ENCODE measurements at regions of chr15 and their contacts with region 1.

Region 1: GRCh38 chr15:89874926-89875564 is 18.7 kb downstream of the AP3S2 start:
- DNase-seq: peak; percentile 77 to 90
- ATAC-seq: peak; percentile 99 to 100
- H3K4me3 ChIP-seq: no peak overlapping the region
- H3K27ac ChIP-seq: no peak overlapping the region
- H3K4me1 ChIP-seq: no peaks in the 10 kb centered on the region
- CTCF ChIP-seq: peak; percentile 98
- EP300 ChIP-seq: no peak
- POLR2A ChIP-seq: no peak
- RAD21 ChIP-seq: peak; percentile 93 to 94

Region 2: GRCh38 chr15:89647191-89647851 is 227.7 kb before region 1 on chr15:
- CTCF ChIA-PET with region 1: interaction called, 12 read pairs
- POLR2A ChIA-PET with region 1: no interaction called
- DNase-seq: peak; percentile 73 to 94
- ATAC-seq: peak; percentile 87 to 96
- H3K4me3 ChIP-seq: no peak overlapping the region
- H3K27ac ChIP-seq: peak overlapping the region in 1 of 2 experiments; percentile 39; a peak in 1 of 6 replicates
- H3K4me1 ChIP-seq: no peaks in the 10 kb centered on the region
- CTCF ChIP-seq: peak; percentile 90
- EP300 ChIP-seq: no peak
- POLR2A ChIP-seq: no peak
- RAD21 ChIP-seq: peak; percentile 57

Region 3: DNA sequence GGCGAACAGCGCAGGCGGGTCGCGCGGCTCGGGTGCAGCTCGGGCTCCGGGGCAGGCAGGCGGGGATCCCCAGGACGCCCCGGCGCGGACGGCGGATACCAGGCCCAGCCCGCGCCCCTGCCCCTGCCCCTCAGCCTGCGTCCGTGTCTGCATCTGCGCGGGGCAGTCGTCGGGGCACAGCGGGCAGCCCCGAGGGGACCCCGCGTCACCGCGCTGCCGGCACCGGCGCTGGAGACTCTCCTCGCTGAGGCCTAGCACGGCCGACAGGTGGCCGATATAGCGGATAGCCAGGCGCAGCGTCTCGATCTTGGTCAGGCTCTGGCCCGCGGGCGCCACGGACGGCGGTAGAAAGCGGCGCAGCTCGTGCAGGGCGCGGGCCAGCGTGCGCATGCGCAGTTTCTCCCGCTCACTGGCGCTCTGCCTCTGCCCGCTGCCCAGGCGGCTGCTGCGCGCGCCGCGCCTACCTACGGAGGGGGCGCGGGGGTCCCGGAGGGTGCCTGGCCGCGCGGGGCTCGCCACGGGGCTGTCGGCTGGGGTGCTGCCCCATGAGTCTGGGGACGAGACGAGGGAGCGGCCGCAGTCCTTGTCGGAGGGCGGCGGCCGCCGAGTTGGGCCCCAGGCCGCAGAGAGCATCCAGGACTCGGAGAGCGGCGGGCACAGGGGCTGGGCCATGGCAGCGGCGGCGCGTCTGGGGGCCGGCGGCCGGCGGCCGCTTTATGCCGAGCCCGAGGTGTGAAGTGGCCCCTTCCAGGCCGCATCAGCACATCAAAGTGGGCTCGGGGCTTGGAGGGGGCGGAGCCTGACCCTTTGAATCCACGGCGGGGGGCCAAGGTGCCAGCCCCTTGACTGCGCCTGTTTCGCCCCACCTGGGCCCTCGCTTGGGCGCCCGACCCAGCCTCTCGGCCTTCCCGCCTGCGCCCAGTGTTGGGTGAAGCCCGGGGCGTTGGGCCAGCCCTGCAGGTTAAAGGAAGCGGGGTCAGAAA is 124.2 kb before region 1 on chr15 and contains the start of gene MESP1:
- CTCF ChIA-PET with region 1: interaction called, 491 read pairs
- POLR2A ChIA-PET with region 1: interaction called, 5 read pairs
- DNase-seq: peak; percentile 96
- ATAC-seq: peak; percentile 94 to 98
- H3K4me3 ChIP-seq: peak within 1 kb of the TSS; percentile 60
- H3K27ac ChIP-seq: peak within 1 kb of the TSS; percentile 81 to 91
- H3K4me1 ChIP-seq: peaks cover 23% of the 10 kb centered on the region
- CTCF ChIP-seq: peak; percentile 74
- EP300 ChIP-seq: no peak
- POLR2A ChIP-seq: peak; percentile 93
- RAD21 ChIP-seq: peak; percentile 51 to 64
- polyA plus RNA-seq, gene MESP1: 1.2 and 1.7 TPM in 2 replicates

Region 4: DNA sequence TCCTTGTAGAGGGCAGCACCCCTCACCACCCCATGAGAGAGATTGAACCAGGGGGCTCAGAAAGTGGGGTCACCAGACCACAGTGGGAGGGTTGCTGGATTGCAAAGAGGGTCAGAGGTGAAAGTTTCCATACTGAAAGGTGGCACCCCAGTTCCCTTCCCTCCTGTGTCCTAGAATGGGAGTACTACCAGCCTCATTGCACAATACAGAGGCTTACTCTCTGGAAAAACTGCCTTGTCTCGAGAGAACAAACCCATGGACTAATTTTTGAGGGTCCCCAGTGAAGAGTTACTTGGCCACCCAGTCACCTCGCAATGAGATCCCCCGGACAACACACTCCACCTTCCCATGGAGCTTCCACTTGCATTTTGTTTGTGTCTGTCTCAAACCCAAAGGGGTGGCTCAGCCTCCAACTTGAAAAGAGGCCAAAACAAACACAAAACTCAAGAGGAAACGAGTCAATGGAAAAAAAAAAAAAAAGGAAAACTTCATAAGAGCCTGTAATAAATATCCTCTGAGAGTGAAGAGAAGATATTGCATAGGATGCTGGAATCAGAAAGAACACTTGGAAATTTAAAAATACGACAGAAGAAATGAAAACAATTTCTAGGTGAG is 80.3 kb before region 1 on chr15:
- CTCF ChIA-PET with region 1: interaction called, 11 read pairs
- POLR2A ChIA-PET with region 1: no interaction called
- DNase-seq: no peak
- ATAC-seq: no peak
- H3K4me3 ChIP-seq: no peak overlapping the region
- H3K27ac ChIP-seq: peak overlapping the region; percentile 21 to 70; a peak in 3 of 6 replicates
- H3K4me1 ChIP-seq: peaks cover 18% of the 10 kb centered on the region
- CTCF ChIP-seq: no peak
- EP300 ChIP-seq: no peak
- POLR2A ChIP-seq: no peak
- RAD21 ChIP-seq: no peak

Region 5: GRCh38 chr15:89828241-89829082 is 46.6 kb before region 1 on chr15:
- CTCF ChIA-PET with region 1: interaction called, 27 read pairs
- POLR2A ChIA-PET with region 1: no interaction called
- DNase-seq: peak in 1 of 2 experiments; percentile 32
- ATAC-seq: peak; percentile 42 to 65; a peak in 5 of 6 replicates
- H3K4me3 ChIP-seq: no peak overlapping the region
- H3K27ac ChIP-seq: peak overlapping the region in 1 of 2 experiments; percentile 68; a peak in 3 of 6 replicates
- H3K4me1 ChIP-seq: peaks cover 27% of the 10 kb centered on the region
- CTCF ChIP-seq: no peak
- EP300 ChIP-seq: no peak
- POLR2A ChIP-seq: no peak
- RAD21 ChIP-seq: no peak

Region 6: GRCh38 chr15:89857673-89858072 is 17.4 kb before region 1 on chr15:
- CTCF ChIA-PET with region 1: interaction called, 53 read pairs
- POLR2A ChIA-PET with region 1: no interaction called
- DNase-seq: peak; percentile 49 to 60
- ATAC-seq: peak; percentile 59 to 78; a peak in 5 of 6 replicates
- H3K4me3 ChIP-seq: no peak overlapping the region
- H3K27ac ChIP-seq: peak overlapping the region; percentile 56 to 66; a peak in 4 of 6 replicates
- H3K4me1 ChIP-seq: peaks cover 29% of the 10 kb centered on the region
- CTCF ChIP-seq: no peak
- EP300 ChIP-seq: no peak
- POLR2A ChIP-seq: no peak
- RAD21 ChIP-seq: no peak

Region 7: DNA sequence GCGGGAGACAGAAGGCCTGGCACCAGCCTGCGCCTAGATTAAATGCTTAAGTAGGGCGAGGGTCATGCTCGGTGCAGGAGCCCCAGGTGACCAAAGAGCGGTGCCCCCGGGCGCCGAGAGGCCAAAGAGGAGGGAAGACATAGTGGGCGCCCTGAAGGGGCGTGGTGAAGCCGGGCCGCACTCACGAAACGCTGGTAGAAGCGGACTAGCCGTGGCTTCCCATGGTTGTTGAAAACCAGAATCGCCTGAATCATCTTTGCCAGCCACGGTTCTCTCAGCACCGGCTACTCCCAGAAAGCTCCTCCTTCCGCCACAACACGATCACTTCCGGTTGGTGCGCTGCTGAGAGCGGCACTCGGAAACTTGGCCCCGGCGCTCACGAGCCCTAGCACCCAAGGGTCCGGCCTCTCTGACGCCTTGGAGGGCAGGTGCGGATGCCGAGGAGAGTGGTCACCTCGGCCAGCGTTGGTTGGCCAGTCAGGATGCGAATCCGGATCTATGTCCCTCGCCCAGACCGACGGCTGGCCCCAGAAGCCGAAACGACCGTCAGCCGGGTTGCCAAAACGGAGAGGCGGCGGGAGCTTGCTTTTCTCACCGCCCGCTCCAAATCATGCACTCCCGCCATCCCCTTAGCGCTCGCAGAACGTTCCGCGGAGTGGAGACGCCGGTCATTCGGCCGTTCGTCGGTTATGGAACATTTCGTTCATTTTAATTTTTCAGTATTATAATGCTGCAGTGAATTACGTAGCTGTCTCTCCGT is 18.8 kb after region 1 on chr15 and contains the start of gene AP3S2:
- CTCF ChIA-PET with region 1: interaction called, 162 read pairs
- POLR2A ChIA-PET with region 1: interaction called, 11 read pairs
- DNase-seq: peak; percentile 91 to 98
- ATAC-seq: peak; percentile 95 to 97
- H3K4me3 ChIP-seq: peak within 1 kb of the TSS; percentile 87
- H3K27ac ChIP-seq: peak within 1 kb of the TSS; percentile 89 to 92
- H3K4me1 ChIP-seq: peaks cover 14% of the 10 kb centered on the region; the same call in 2 of the 3 replicates
- CTCF ChIP-seq: no peak
- EP300 ChIP-seq: no peak; a peak in 1 of 5 replicates
- POLR2A ChIP-seq: peak; percentile 81
- RAD21 ChIP-seq: peak; percentile 6 to 46; a peak in 3 of 5 replicates
- polyA plus RNA-seq, gene AP3S2: 56.7 and 85.9 TPM in 2 replicates